BJ (cell line): ENCODE measurements at regions of chr1 and their contacts with region 1.

Region 1: GRCh38 chr1:204398217-204399081 is 13.2 kb downstream of the PPP1R15B start:
- DNase-seq: no peak
- H3K4me3 ChIP-seq: no peak overlapping the region
- H3K27me3 ChIP-seq: no peaks in the 10 kb centered on the region
- CTCF ChIP-seq: peak; percentile 87

Region 2: GRCh38 chr1:204372181-204372580 is 26.3 kb before region 1 on chr1:
- CTCF ChIA-PET with region 1: interaction called, 13 read pairs
- POLR2A ChIA-PET with region 1: no interaction called
- DNase-seq: no peak
- H3K4me3 ChIP-seq: no peak overlapping the region
- H3K27me3 ChIP-seq: peaks cover 31% of the 10 kb centered on the region
- CTCF ChIP-seq: no peak

Region 3: DNA sequence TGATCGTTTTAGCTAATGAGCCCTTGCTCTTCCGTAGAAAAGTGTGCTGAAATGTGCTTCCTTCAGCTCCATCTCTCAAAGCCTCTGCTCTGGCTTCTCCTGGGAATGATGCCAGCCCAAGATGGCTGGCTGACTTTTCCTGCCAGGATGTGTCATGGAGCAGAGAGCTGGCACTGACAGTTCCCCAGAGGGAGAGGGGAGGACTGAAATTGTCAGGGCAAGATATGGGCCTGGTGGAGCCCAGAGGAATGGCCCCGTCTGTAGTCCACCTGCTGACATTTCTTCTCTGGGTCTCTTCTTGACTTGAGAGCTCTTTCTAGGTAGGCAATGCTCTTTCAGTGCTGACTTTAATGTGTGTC is 13.5 kb before region 1 on chr1:
- CTCF ChIA-PET with region 1: interaction called, 68 read pairs
- POLR2A ChIA-PET with region 1: interaction called, 8 read pairs
- DNase-seq: no peak
- H3K4me3 ChIP-seq: no peak overlapping the region
- H3K27me3 ChIP-seq: peaks cover 2% of the 10 kb centered on the region
- CTCF ChIP-seq: no peak

Region 4: DNA sequence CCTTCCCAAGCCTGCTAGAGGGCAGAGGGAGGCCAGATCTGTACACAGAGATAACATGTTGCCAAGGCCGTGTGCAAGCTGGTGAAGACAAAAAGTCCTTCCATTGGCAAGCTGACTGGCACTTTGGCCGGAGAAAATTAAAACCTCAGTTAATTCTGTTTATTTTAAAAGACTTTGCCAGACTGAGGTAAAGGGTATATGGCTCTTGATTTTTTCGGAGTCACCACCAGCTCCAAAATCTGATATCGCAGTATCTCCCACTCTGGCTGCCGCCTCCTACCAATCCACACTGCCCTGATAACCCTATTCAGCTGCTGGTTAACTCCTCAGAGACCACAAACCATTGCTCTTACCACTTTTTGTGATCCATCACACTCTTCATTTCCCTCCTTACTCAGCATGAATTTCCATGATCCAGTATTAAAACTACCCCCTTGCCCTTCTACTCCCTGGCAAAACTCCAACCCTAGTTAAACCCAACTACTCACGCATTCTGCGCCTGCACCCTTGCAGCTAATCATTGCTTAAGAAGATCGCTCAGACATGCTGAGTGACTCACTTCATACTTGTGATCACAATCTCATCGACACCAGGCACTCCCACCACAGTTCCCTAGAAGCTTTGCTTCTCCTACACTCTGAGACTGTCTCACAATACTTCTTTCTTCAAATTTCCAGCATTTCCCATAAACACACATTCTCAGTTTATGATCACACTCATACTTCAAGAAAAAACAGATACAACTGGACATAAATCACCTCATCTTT is 19.0 kb after region 1 on chr1:
- CTCF ChIA-PET with region 1: interaction called, 12 read pairs
- POLR2A ChIA-PET with region 1: no interaction called
- DNase-seq: peak; percentile 98
- H3K4me3 ChIP-seq: peak overlapping the region; percentile 5; the same call in 1 of the 2 replicates
- H3K27me3 ChIP-seq: no peaks in the 10 kb centered on the region
- CTCF ChIP-seq: no peak

Region 5: GRCh38 chr1:204506961-204507387 is 108.5 kb after region 1 on chr1:
- CTCF ChIA-PET with region 1: interaction called, 13 read pairs
- POLR2A ChIA-PET with region 1: no interaction called
- DNase-seq: peak; percentile 75
- H3K4me3 ChIP-seq: peak overlapping the region; percentile 37
- H3K27me3 ChIP-seq: no peaks in the 10 kb centered on the region
- CTCF ChIP-seq: no peak